ENCODE measurements at regions of chr18 and their contacts with region 1.

Region 1: DNA sequence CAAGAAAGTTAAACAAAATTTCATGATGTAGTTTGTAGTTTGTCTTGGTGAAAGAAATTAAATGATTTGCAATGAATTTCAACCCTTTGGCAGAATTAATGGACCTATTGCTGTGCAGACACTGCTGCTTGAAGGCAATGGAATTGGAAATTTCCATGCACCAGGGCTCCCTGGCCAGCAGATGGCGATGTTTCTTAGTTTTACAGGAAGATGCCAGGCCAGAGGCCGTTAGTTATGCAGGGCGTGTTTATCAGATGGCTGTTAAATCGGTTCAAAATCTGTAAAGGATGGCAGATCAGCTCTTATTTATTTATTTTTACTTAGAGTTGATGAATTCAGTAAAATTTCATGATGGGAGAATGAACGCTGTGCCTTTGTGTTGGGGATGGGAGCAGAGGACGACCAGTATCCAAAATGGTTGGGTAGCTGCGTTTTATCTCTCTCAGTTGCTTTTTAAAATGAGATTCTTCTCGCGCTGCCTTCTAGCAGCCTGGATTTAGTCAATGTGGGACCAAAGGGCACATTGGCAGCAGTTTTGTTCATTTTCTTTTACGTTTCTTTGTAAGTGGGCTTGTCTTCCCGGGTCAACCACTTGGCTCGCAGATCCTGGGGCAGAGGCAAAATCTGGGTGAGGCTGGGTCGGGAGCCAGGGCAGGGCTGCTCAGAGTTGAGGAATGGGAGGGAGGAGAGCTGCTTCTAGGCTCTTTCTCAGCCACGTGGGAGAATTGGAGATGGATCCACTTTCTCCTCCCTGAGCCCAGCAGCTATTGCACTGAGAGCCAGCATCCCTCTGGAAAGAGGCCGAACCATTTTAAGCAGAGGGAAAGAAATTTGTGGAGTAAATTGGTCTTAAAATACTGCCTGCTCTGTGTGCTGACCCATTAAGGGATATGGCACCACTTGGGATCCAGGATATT is 344.0 kb downstream of the PIK3C3 start:
- DNase-seq: peak; percentile 7
- H3K4me3 ChIP-seq: no peak overlapping the region
- CTCF ChIP-seq: peak; percentile 81

Region 2: GRCh38 chr18:42274488-42275137 is 24.4 kb before region 1 on chr18:
- CTCF ChIA-PET with region 1: interaction called, 12 read pairs
- POLR2A ChIA-PET with region 1: no interaction called
- DNase-seq: no peak
- H3K4me3 ChIP-seq: no peak overlapping the region
- CTCF ChIP-seq: peak; percentile 13

Region 3: GRCh38 chr18:42310956-42311355 is 11.9 kb after region 1 on chr18:
- CTCF ChIA-PET with region 1: interaction called, 24 read pairs
- POLR2A ChIA-PET with region 1: no interaction called
- DNase-seq: no peak
- H3K4me3 ChIP-seq: no peak overlapping the region
- CTCF ChIP-seq: no peak

Region 4: DNA sequence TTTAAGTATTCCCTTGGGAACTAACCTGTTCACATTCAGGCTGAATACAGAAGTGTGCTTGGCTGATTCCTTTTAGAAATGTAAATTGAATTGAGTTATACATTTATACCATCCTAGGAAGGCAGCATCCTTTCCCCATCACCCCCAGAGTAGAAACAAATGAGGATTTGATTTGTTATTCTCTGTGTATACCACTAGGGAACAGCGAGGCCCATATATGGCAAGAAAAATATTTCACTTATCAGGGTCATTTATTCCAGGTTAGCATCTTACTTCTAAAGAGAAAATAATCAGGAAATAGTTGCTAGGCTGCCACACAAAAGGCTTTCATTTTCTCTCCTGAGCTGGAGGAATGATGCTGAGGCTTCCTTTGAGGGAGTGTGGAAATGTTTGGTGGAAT is 172.9 kb after region 1 on chr18:
- CTCF ChIA-PET with region 1: no interaction called
- POLR2A ChIA-PET with region 1: no interaction called
- DNase-seq: no peak
- H3K4me3 ChIP-seq: no peak overlapping the region
- CTCF ChIP-seq: no peak

Region 5: GRCh38 chr18:43271593-43272432 is 972.8 kb after region 1 on chr18:
- CTCF ChIA-PET with region 1: interaction called, 51 read pairs
- POLR2A ChIA-PET with region 1: no interaction called
- DNase-seq: peak; percentile 7
- H3K4me3 ChIP-seq: no peak overlapping the region
- CTCF ChIP-seq: peak; percentile 59

Region 6: DNA sequence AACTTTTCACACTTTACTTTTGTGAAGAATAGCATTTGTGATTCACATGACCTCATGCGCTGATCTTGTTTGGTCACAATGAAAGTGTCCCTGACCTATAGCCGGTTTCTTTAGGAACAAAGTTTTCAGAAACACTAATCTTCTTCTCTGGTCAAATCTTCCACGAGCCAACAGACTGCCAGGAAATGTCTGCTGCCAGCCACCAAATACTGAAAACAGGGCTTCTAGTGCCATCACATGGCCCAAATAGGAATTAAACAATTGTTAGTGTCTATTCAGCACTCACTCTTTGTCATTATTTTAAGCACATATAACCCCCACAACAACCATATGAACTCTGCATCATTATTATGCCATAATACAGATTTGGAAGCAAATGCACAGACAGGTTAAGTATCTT is 1264.8 kb after region 1 on chr18:
- CTCF ChIA-PET with region 1: interaction called, 11 read pairs
- POLR2A ChIA-PET with region 1: no interaction called
- DNase-seq: no peak
- H3K4me3 ChIP-seq: no peak overlapping the region
- CTCF ChIP-seq: peak; percentile 25

Region 7: DNA sequence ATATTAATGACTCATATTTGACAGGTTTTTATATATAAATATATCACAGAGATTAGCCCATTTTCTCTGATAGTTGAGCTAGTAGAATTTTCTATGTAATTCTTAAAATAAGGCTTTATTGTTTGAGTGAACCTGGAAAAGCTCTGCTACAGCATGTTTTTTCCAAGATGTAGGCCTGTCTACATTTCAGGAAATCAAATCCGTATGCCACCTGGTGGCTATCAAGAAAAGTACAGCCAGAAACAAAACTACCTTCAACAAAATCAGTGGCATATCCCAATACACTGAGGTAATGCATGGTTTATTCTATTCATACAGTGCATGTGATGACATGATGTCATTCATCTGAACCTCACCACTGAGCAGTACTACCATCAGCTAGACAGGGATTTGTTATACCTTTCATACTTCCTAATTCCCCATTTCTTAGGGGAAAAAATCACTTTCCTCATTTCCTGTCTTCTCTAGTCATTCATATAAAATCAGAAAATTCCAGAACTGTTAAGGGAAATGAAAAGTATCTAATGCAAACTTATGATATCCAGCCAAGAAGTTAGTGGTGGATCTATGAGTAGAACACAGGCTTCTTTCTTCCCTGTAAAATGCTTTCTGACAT is 1288.6 kb after region 1 on chr18:
- CTCF ChIA-PET with region 1: interaction called, 14 read pairs
- POLR2A ChIA-PET with region 1: no interaction called
- DNase-seq: no peak
- H3K4me3 ChIP-seq: no peak overlapping the region
- CTCF ChIP-seq: peak; percentile 61

Measured in AG04449 (cell line).